HAP-1 (cell line): ENCODE measurements at regions of chr1 and their contacts with region 1.

Region 1: DNA sequence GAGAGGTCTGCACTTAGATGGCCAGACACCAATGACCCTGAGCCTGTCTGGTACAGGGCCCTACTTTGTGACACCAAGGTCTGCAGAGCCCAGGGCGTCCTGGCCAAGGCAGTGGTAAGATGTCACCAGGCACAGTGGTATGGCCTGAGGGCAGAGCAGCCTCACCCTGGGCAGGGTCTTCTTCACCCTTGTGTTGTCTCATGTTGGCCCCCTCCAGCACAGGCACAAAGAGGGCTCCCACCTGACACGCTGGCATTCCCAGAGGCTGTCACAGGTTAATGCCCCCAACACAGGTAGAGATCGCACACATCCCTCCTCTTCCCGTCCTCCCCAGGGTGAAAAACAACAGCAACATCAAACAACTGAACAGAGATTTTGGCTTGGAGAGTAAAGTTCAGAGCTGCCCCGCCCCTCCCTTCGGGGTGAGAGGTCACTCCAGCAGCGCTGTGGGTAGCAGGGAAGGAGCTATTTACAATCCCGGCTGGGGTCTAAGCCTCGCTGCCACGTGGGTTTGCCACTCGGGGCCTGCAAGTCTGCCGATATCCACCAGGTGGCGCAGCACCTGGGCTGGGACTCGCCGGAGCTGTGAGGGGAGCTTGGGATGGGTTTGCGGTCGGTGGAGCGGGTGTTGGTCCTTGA is 12.6 kb downstream of the EFNA3 start:
- DNase-seq: peak; percentile 73 to 94
- H3K4me3 ChIP-seq: no peak overlapping the region
- H3K4me1 ChIP-seq: peaks cover 2% of the 10 kb centered on the region
- H3K27me3 ChIP-seq: peaks cover 3% of the 10 kb centered on the region; the same call in 1 of the 2 replicates

Region 2: GRCh38 chr1:154682254-154682653 is 408.9 kb before region 1 on chr1:
- in situ Hi-C with region 1: no loop called
- DNase-seq: no peak
- H3K4me3 ChIP-seq: no peak overlapping the region
- H3K4me1 ChIP-seq: no peaks in the 10 kb centered on the region
- H3K27me3 ChIP-seq: no peaks in the 10 kb centered on the region; the same call in 1 of the 2 replicates

Region 3: DNA sequence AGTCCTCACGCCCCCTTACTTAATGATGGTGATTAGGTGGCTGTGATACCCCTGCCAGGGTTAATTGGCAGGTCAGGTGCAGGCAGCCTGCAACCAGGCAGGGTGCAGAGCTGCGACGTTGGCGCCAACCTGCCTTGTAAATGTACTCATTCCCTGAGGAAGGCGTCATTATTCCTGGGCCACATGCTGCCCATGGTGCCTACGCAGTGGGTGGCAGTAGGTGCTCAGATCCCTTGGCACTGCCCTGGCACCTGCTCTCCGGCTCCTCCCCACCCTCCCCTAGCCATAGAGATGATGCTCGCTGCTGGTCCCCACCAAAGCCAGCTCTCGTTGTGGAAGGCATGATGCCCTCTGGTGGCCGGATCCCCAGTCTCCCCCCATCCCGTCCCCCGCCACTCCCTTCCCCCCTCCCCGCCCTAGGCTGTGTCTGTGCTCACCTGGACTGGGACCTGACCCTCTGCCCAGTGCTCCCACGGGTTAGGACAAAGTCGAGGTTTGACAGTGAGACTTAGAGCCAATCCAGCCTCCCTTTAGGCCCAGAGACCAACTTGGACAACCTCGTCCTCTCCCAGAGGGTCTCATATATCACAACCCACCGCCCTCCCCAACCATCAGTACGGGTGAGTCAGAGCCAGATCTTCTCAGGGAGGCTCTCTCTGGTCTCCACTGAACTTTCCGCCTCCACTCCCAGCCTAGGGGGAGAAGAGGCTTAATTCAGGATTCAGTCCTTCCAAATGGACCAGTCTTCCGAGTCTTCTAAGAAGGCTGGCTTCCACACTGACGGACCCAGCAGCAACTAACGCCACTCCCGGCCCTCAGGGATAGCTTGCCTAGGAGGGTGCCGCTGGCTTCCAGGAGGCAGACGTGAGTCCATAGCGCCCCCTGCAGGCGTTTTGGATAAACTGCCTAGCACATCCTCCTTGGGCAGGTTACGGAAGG is 76.2 kb after region 1 on chr1:
- in situ Hi-C with region 1: loop called (anchors 5 kb)
- DNase-seq: peak; percentile 78 to 94
- H3K4me3 ChIP-seq: peak overlapping the region; percentile 15
- H3K4me1 ChIP-seq: no peaks in the 10 kb centered on the region
- H3K27me3 ChIP-seq: no peaks in the 10 kb centered on the region